Lower leg skin (tissue), 4 donors: ENCODE measurements at regions of chr20 and their contacts with region 1.

Region 1: GRCh38 chr20:22846863-22847262 is 188.2 kb upstream of the SSTR4 start:
- DNase-seq: no peak
- H3K4me3 ChIP-seq: no peak overlapping the region
- CTCF ChIP-seq: no peak
- POLR2A ChIP-seq: no peak

Region 2: DNA sequence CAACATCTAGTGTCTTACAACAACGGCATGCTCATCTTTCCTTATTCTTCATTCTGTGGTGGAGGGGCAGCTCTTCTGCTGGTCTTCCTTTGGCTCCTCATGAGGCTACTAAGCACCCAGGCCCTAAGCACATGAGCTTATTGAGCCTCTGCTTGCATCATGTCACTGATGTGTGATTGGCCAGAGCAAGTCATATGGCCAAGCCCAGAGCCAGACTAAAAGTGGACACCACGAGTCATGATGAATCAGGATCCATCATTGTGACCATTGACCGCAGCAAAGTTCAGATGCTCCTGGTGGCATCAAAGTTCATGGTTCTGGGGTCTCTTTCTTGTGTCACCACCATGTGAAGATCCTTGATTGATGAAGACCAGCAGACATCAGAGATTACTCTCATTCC is 70.5 kb before region 1 on chr20:
- intact Hi-C with region 1: no loop called
- DNase-seq: no peak
- H3K4me3 ChIP-seq: no peak overlapping the region
- CTCF ChIP-seq: no peak
- POLR2A ChIP-seq: no peak

Region 3: DNA sequence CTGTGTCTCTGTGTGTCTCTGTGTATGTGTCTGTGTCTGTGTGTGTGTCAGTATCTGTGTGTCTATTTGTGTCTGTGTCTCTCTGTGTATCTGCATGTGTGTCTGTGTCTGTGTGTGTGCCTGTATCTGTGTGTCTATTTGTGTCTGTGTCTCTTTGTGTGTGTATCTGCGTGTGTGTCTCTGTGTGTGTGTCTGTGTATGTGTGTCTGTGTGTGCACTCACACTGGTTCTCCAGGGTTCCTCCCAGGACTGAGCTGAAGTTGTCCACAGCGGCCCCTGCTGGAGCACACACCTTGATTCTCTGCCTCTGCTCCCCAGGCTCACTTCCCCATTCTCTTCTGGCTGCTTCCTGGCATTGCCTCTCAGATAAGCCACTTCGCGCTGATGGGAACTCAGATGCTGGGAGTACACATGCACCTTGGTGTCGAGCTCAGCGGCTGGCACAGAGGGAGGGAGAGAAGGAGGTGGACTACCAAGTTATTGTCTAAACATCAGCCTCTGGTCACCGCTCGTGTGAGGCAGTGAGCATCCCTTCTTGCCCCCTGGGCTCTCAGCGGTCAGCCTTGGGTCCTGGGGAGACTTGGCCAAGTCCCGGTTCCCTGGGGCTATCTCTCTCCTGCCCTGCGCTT is 398.8 kb after region 1 on chr20:
- intact Hi-C with region 1: loop called (anchors 5 kb)
- DNase-seq: peak; percentile 30 to 92
- H3K4me3 ChIP-seq: no peak overlapping the region
- CTCF ChIP-seq: peak in 1 of 3 donors; percentile 9
- POLR2A ChIP-seq: no peak